ENCODE measurements at regions of chr17 and their contacts with region 1.

Region 1: DNA sequence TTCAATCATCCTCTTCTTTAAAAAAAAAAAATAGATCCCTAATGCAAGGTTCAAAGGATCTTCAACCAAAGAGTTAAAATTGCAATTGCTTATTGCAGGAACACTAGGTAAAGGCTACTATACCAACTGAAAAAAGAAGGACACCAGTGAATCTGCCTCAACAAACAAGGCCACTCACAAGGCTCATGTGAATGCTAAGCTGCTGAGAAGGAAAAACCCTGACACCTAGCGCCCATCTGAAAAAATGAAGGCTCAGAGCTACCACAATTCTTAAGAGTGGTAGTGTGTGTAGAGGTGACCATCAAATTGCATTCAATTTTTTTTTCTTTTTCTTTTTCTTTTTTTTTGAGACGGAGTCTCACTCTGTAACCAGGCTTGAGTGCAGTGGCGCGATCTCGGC is 201.6 kb upstream of the C17orf78 start:
- DNase-seq: peak in 4 of 10 donors; percentile 20 to 65 (median 42)
- H3K4me3 ChIP-seq: no peak overlapping the region
- H3K27ac ChIP-seq: peak overlapping the region in 6 of 59 donors; percentile 9 to 94 (median 60)
- H3K27me3 ChIP-seq: no peaks in the 10 kb centered on the region
- CTCF ChIP-seq: peak; percentile 23 to 77 (median 61)

Region 2: GRCh38 chr17:37089956-37090355 is 84.2 kb before region 1 on chr17:
- intact Hi-C with region 1: loop called in 1 of 2 experiments (anchors 1 kb)
- DNase-seq: no peak
- H3K4me3 ChIP-seq: no peak overlapping the region
- H3K27ac ChIP-seq: peak overlapping the region in 2 of 59 donors; percentile 13 to 46
- H3K27me3 ChIP-seq: no peaks in the 10 kb centered on the region
- CTCF ChIP-seq: no peak

Region 3: GRCh38 chr17:37117373-37118142 is 56.6 kb before region 1 on chr17:
- intact Hi-C with region 1: loop called in 1 of 2 experiments (anchors 10 kb)
- DNase-seq: peak in 1 of 10 donors; percentile 13
- H3K4me3 ChIP-seq: no peak overlapping the region
- H3K27ac ChIP-seq: no peak overlapping the region
- H3K27me3 ChIP-seq: no peaks in the 10 kb centered on the region
- CTCF ChIP-seq: no peak

Measured in dorsolateral prefrontal cortex (tissue), 120 donors.